Naive thymus-derived CD4-positive, alpha-beta T cell (primary cell): ENCODE measurements at regions of chr6 and their contacts with region 1.

Region 1: DNA sequence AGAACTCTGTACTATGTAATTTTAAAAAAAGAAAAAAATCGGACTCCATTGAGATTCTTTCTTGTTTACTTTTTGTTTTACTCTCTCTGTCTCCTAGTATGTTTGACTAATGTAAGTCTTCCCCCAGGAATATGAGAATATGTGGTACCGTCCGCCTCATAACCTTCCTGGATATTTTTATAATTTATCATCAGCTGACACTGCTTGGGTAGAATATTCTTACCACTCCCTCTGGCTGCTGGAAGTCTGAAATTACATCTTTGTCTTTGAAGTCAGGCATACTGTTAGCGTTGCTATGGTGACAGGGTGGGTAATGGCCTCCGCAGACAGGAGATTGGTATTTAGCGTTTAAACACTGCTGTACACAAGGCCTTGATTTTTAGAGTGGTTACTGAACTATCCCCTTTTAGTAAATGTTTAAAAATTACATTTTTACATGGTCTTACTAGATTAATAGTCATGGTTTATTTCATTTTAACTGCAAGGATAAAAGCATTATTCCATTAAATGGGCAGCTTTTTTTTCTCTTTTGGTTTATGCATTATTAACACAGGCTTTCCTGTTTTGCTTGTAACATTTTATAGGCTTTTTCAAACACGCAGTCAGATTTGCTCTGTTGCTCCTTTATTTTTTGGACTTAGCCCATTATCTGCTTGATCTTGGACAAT is 176.4 kb downstream of the ARID1B start:
- DNase-seq: peak in 7 of 9 donors; percentile 67 to 85 (median 82)
- ATAC-seq: peak; percentile 95
- H3K4me3 ChIP-seq: no peak overlapping the region
- H3K4me3 Mint-ChIP-seq: peak overlapping the region in 5 of 10 donors; percentile 10 to 51 (median 37)
- H3K27ac ChIP-seq: no peak overlapping the region
- H3K27ac Mint-ChIP-seq: peak overlapping the region in 8 of 9 donors; percentile 27 to 83 (median 51)
- H3K4me1 ChIP-seq: peaks cover 15 to 20% of the 10 kb centered on the region in 2 donors
- H3K4me1 Mint-ChIP-seq: peaks cover 41 to 84% (median 77%) of the 10 kb centered on the region in 7 donors
- H3K27me3 ChIP-seq: no peaks in the 10 kb centered on the region
- H3K27me3 Mint-ChIP-seq: no peaks in the 10 kb centered on the region

Region 2: DNA sequence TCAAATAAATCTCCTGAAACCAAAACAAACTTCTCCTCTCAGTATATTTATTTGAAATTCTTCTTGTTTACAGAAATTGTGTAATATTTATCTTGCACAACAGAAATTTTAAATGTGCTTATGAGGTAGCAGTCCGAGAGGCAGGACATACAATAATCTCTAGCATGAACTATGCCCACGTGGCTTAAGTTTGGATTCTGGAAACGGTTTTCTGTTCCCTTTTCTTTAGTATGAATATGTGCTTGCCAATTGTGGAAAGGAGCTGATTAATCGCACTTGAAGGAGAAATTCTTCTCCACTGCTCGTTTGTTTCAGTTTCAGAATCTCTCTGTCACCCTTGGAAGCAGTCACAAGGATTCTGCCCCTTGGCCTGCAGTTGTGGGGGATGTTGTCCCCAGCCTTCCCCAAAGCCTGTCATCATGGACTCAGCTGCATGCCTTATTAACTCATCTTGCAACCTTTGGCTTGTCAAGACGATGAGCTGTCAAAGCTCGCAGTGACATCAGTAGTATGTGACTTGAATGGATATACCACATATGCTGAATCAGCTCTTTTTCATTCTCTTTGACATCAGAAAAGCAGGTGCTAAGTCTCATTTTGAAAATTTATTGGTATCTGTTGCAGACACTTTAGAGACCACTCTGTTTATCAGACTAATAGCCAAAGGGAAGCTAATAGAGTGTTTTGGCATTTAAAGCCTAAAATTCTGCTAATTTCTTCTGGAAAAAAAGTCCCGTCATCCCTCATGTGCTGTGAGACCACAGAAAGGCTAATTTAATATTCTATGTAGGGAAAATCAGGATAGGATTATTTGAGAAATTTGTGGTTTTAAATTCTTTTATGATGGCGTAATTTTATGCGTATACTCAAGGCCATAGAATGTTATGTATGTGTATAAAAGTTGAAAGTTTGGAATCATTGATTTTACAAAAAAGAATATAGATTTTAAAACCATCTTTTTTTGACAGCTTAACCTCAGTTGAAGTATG is 10.4 kb after region 1 on chr6:
- CTCF ChIA-PET with region 1: no interaction called
- POLR2A ChIA-PET with region 1: no interaction called
- intact Hi-C with region 1: loop called in 1 of 2 experiments (anchors 2 kb)
- DNase-seq: no peak
- ATAC-seq: peak; percentile 81
- H3K4me3 ChIP-seq: no peak overlapping the region
- H3K4me3 Mint-ChIP-seq: peak overlapping the region in 4 of 10 donors; percentile 6 to 37 (median 29)
- H3K27ac ChIP-seq: no peak overlapping the region
- H3K27ac Mint-ChIP-seq: peak overlapping the region in 2 of 9 donors; percentile 8 to 43
- H3K4me1 ChIP-seq: peaks cover 0 to 5% of the 10 kb centered on the region in 2 donors
- H3K4me1 Mint-ChIP-seq: peaks cover 10 to 66% (median 58%) of the 10 kb centered on the region in 7 donors
- H3K27me3 ChIP-seq: no peaks in the 10 kb centered on the region
- H3K27me3 Mint-ChIP-seq: no peaks in the 10 kb centered on the region

Region 3: GRCh38 chr6:157563611-157564284 is 610.1 kb after region 1 on chr6:
- CTCF ChIA-PET with region 1: no interaction called
- POLR2A ChIA-PET with region 1: no interaction called
- intact Hi-C with region 1: no loop called
- DNase-seq: peak in 1 of 9 donors; percentile 22
- ATAC-seq: peak; percentile 29
- H3K4me3 ChIP-seq: no peak overlapping the region
- H3K4me3 Mint-ChIP-seq: peak overlapping the region in 1 of 10 donors; percentile 40
- H3K27ac ChIP-seq: no peak overlapping the region
- H3K27ac Mint-ChIP-seq: peak overlapping the region in 1 of 9 donors; percentile 60
- H3K4me1 ChIP-seq: peaks cover 6 to 15% of the 10 kb centered on the region in 2 donors
- H3K4me1 Mint-ChIP-seq: peaks cover 7 to 47% (median 21%) of the 10 kb centered on the region in 7 donors
- H3K27me3 ChIP-seq: no peaks in the 10 kb centered on the region
- H3K27me3 Mint-ChIP-seq: peaks cover 0 to 10% (median 0%) of the 10 kb centered on the region in 5 donors